CD4-positive, alpha-beta T cell (primary cell): ENCODE measurements at regions of chr2 and their contacts with region 1.

Region 1: DNA sequence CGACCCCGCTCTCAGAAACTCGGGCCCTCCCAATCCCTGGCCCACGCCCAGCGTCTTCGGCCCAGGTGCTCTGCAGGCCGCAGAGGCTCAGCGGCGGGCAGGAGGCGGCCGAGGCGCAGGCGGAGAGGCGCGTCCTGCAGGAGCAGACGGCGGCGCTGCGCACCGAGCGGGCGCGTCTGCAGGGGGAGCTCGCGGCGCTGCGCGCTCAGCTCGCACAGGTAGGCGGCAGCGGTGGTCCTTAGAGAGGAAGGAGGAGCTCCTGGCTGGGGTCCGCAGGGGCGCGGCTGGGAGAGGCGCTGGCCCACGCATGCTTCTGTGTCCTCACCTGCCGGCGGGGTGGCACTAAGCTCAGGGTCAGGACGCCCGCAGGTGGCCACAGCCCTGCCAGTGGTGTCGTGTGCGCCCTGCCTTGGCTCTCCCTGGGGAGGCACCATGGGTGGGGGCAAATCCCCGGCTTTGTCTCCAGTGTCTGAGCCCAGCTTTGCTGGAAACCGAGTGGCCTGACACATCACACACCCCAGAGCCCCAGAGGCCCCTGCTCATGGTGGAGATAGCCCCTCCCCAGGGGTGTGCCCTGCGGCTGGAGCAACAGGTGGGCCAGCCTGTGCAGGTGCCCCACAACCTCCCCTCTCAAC is 14.9 kb upstream of the SNED1 start:
- DNase-seq: peak in 12 of 14 experiments; percentile 3 to 74 (median 33)
- ATAC-seq: peak; percentile 93
- H3K4me3 ChIP-seq: no peak overlapping the region
- H3K4me3 Mint-ChIP-seq: no peak overlapping the region
- H3K27ac ChIP-seq: no peak overlapping the region
- H3K27ac Mint-ChIP-seq: no peak overlapping the region
- H3K4me1 ChIP-seq: peaks cover 6% of the 10 kb centered on the region
- H3K4me1 Mint-ChIP-seq: no peaks in the 10 kb centered on the region
- H3K27me3 ChIP-seq: no peaks in the 10 kb centered on the region
- H3K27me3 Mint-ChIP-seq: no peaks in the 10 kb centered on the region
- CTCF ChIP-seq: peak; percentile 65

Region 2: GRCh38 chr2:241049739-241050623 is 66.5 kb after region 1 on chr2:
- CTCF ChIA-PET with region 1: no interaction called
- POLR2A ChIA-PET with region 1: no interaction called
- intact Hi-C with region 1: loop called in 1 of 2 experiments (anchors 5 kb)
- DNase-seq: peak in 1 of 14 experiments; percentile 11
- ATAC-seq: no peak
- H3K4me3 ChIP-seq: no peak overlapping the region
- H3K4me3 Mint-ChIP-seq: no peak overlapping the region
- H3K27ac ChIP-seq: no peak overlapping the region
- H3K27ac Mint-ChIP-seq: no peak overlapping the region
- H3K4me1 ChIP-seq: no peaks in the 10 kb centered on the region
- H3K4me1 Mint-ChIP-seq: no peaks in the 10 kb centered on the region
- H3K27me3 ChIP-seq: no peaks in the 10 kb centered on the region
- H3K27me3 Mint-ChIP-seq: no peaks in the 10 kb centered on the region
- CTCF ChIP-seq: no peak